Naive thymus-derived CD4-positive, alpha-beta T cell (primary cell): ENCODE measurements at regions of chr17 and their contacts with region 1.

Region 1: DNA sequence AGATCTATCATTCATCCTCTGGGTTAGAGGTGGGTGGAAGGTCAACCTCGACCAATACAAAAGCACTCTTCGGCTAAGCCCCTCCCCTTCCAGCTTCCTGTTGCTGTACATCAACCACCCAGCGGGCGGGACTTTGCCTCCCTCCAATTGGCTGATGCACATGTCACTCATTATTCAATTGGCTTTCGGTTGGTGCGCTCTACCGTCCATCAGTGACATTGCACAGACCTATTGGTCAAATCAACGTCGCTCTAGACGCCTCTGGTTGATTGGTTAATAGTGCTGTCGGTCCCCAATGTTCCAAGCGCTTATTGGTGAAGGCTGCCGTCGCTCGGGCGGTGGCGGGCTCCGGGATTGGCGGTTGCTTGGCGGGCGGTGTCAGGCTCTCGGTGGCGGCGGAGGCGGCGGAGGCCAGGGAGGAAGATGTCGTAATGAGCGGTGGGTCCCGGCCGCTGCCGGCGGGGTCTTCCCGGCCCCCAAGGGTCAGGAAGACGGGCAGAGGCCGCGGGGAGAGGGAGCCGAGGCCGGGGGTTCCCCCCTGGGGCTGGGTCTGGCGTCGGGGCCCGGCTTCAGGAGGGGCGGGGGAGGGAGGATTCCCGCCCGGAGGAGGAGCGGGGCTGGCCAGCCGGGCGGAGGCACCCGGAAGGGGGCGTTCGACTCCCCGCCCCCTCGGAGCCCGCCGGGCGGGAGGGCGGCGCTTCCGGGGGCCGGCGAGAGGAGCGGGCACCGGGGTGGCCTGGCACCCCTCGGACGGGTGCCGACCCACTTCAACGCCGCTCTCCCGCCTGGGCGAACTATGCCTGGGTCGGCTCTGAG is at the start of gene SP2:
- DNase-seq: peak; percentile 96 to 100 (median 100)
- ATAC-seq: peak; percentile 92
- H3K4me3 ChIP-seq: peak within 1 kb of the TSS; percentile 80
- H3K4me3 Mint-ChIP-seq: peak within 1 kb of the TSS; percentile 88 to 100 (median 97)
- H3K27ac ChIP-seq: peak within 1 kb of the TSS; percentile 98
- H3K27ac Mint-ChIP-seq: peak within 1 kb of the TSS; percentile 98 to 100 (median 99)
- H3K4me1 ChIP-seq: peaks cover 20 to 23% of the 10 kb centered on the region in 2 donors
- H3K4me1 Mint-ChIP-seq: peaks cover 31 to 66% (median 57%) of the 10 kb centered on the region in 7 donors
- H3K27me3 ChIP-seq: no peaks in the 10 kb centered on the region
- H3K27me3 Mint-ChIP-seq: peaks cover 0 to 4% (median 0%) of the 10 kb centered on the region in 5 donors
- total RNA-seq, gene SP2: 25.2 to 36.5 (median 30.8) TPM

Region 2: GRCh38 chr17:47323382-47324222 is 572.5 kb before region 1 on chr17 and contains the start of gene EFCAB13:
- CTCF ChIA-PET with region 1: no interaction called
- POLR2A ChIA-PET with region 1: no interaction called
- intact Hi-C with region 1: loop called in 1 of 2 experiments (anchors 5 kb)
- DNase-seq: peak; percentile 55 to 84 (median 73)
- ATAC-seq: peak; percentile 91
- H3K4me3 ChIP-seq: peak within 1 kb of the TSS; percentile 93
- H3K4me3 Mint-ChIP-seq: peak within 1 kb of the TSS; percentile 92 to 100 (median 98)
- H3K27ac ChIP-seq: peak within 1 kb of the TSS; percentile 76
- H3K27ac Mint-ChIP-seq: peak within 1 kb of the TSS; percentile 91 to 99 (median 98)
- H3K4me1 ChIP-seq: peaks cover 0 to 3% of the 10 kb centered on the region in 2 donors
- H3K4me1 Mint-ChIP-seq: peaks cover 13 to 26% (median 22%) of the 10 kb centered on the region in 7 donors
- H3K27me3 ChIP-seq: no peaks in the 10 kb centered on the region
- H3K27me3 Mint-ChIP-seq: peaks cover 0 to 28% (median 0%) of the 10 kb centered on the region in 5 donors
- total RNA-seq, gene EFCAB13: 3.7 to 37.4 (median 19.9) TPM

Region 3: GRCh38 chr17:47698749-47699535 is 197.1 kb before region 1 on chr17:
- CTCF ChIA-PET with region 1: no interaction called
- POLR2A ChIA-PET with region 1: no interaction called
- intact Hi-C with region 1: loop called in 1 of 2 experiments (anchors 10 kb)
- DNase-seq: peak; percentile 34 to 82 (median 63)
- ATAC-seq: peak; percentile 70
- H3K4me3 ChIP-seq: no peak overlapping the region
- H3K4me3 Mint-ChIP-seq: peak overlapping the region in 1 of 10 donors; percentile 29
- H3K27ac ChIP-seq: no peak overlapping the region
- H3K27ac Mint-ChIP-seq: peak overlapping the region in 2 of 9 donors; percentile 38 to 78
- H3K4me1 ChIP-seq: peaks cover 17 to 43% of the 10 kb centered on the region in 2 donors
- H3K4me1 Mint-ChIP-seq: peaks cover 19 to 54% (median 27%) of the 10 kb centered on the region in 7 donors
- H3K27me3 ChIP-seq: no peaks in the 10 kb centered on the region
- H3K27me3 Mint-ChIP-seq: peaks cover 0 to 3% (median 0%) of the 10 kb centered on the region in 5 donors

Region 4: DNA sequence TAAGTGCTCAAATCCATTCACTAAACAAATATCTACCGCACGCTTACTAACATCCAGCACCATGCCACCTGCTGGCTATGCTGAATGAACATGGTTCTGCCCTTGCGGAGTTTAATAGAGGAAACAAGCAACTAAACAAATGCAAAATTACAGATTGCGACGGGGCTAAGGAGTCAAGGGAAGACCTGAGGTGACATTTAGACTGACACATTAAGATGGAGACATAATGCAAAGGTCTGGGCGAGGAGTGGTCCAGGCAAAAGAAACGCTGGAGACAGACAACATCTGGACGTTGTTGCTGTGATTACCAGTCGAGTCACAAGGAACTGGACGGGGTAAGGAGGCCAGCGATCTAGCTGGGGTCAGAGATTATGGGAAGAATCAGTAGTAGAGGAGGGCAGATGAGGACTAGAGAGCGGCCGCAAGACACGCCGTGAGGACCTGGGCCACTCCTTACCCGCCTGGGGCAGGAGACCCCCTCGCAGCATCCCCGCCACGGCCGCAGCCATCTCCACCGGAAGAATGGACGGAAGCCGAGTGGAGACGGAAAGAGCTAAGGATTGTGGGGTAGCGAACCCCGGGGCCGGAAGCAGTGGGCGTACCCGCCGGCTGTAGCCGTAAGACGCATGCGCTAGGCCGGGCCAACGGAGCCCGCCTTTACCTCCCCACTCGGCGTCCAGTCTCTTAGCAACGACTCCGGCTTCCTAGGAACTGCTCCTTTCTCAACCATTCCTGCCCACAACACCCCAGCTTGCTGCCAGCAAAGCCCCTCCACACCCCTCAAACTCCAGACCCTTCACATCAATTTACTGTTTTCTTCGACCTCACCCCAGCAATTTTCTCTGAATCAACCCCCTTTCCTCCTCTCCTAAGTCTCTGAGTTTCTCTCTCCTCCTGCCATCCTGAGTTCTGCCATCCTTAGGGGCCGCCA is 64.8 kb before region 1 on chr17 and contains the starts of genes LRRC46 and MRPL10:
- CTCF ChIA-PET with region 1: interaction called, 4 read pairs
- POLR2A ChIA-PET with region 1: interaction called, 27 read pairs
- intact Hi-C with region 1: loop called (anchors 1 kb)
- DNase-seq: peak; percentile 79 to 96 (median 91)
- ATAC-seq: peak; percentile 88
- H3K4me3 ChIP-seq: peak within 1 kb of the TSS; percentile 99
- H3K4me3 Mint-ChIP-seq: peak within 1 kb of the TSS; percentile 89 to 98 (median 92)
- H3K27ac ChIP-seq: peak within 1 kb of the TSS; percentile 77
- H3K27ac Mint-ChIP-seq: peak within 1 kb of the TSS; percentile 76 to 96 (median 92)
- H3K4me1 ChIP-seq: peaks cover 31 to 38% of the 10 kb centered on the region in 2 donors
- H3K4me1 Mint-ChIP-seq: peaks cover 34 to 79% (median 70%) of the 10 kb centered on the region in 7 donors
- H3K27me3 ChIP-seq: no peaks in the 10 kb centered on the region
- H3K27me3 Mint-ChIP-seq: no peaks in the 10 kb centered on the region
- total RNA-seq, gene LRRC46: 0.20 to 1.7 (median 0.66) TPM
- total RNA-seq, gene MRPL10: 33.6 to 51.2 (median 35.7) TPM

Region 5: DNA sequence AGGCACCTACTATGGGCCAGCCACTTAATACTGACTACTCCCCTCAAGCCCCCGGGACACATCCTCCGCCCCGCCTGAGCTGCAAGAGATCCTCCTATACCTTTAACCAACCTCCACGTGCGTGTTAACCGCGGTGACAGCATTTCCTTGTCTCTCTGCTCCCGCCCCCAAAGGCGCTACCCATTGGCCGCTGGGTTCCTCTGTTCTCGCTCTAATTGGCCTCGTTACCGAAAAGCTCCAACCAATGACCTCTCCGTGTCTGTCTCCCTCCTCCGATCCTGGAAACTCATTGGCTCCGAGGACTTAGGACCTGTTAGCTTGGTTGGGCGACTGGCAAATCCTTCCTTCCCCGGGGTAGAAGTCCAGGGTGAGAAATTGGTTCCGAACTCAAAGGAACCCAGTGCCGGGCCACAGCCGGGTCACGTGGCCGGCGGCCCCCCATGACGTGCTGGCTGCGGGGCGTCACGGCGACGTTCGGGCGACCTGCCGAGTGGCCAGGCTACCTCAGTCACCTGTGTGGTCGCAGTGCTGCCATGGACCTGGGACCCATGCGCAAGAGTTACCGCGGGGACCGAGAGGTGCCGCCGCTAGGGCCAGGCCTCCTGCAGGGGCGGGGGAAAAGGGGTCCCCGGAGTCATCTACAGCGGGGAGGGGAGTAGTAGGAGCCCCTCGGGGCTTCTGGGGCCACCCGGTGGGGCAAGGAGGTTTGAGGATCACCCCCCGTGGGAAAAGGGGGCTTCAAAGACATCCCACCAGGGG is 45.4 kb after region 1 on chr17 and contains the start of gene PNPO:
- CTCF ChIA-PET with region 1: interaction called, 3 read pairs
- POLR2A ChIA-PET with region 1: interaction called, 24 read pairs
- intact Hi-C with region 1: loop called (anchors 1 kb)
- DNase-seq: peak; percentile 66 to 96 (median 94)
- ATAC-seq: peak; percentile 99
- H3K4me3 ChIP-seq: peak within 1 kb of the TSS; percentile 75
- H3K4me3 Mint-ChIP-seq: peak within 1 kb of the TSS; percentile 75 to 96 (median 88)
- H3K27ac ChIP-seq: peak within 1 kb of the TSS; percentile 90
- H3K27ac Mint-ChIP-seq: peak within 1 kb of the TSS; percentile 34 to 95 (median 86)
- H3K4me1 ChIP-seq: peaks cover 21 to 33% of the 10 kb centered on the region in 2 donors
- H3K4me1 Mint-ChIP-seq: peaks cover 35 to 63% (median 47%) of the 10 kb centered on the region in 7 donors
- H3K27me3 ChIP-seq: no peaks in the 10 kb centered on the region
- H3K27me3 Mint-ChIP-seq: no peaks in the 10 kb centered on the region
- total RNA-seq, gene PNPO: 12.0 to 35.7 (median 14.1) TPM

Region 6: GRCh38 chr17:48011405-48012150 is 115.5 kb after region 1 on chr17:
- CTCF ChIA-PET with region 1: no interaction called
- POLR2A ChIA-PET with region 1: no interaction called
- intact Hi-C with region 1: loop called in 1 of 2 experiments (anchors 1 kb)
- DNase-seq: peak in 7 of 9 donors; percentile 20 to 34 (median 32)
- ATAC-seq: peak; percentile 74
- H3K4me3 ChIP-seq: peak overlapping the region; percentile 47
- H3K4me3 Mint-ChIP-seq: peak overlapping the region; percentile 70 to 90 (median 78)
- H3K27ac ChIP-seq: no peak overlapping the region
- H3K27ac Mint-ChIP-seq: peak overlapping the region in 1 of 9 donors; percentile 48
- H3K4me1 ChIP-seq: peaks cover 9% of the 10 kb centered on the region in 2 donors
- H3K4me1 Mint-ChIP-seq: peaks cover 9 to 25% (median 13%) of the 10 kb centered on the region in 7 donors
- H3K27me3 ChIP-seq: peaks cover 7 to 10% of the 10 kb centered on the region in 2 donors
- H3K27me3 Mint-ChIP-seq: peaks cover 44 to 66% (median 55%) of the 10 kb centered on the region in 5 donors

Region 7: DNA sequence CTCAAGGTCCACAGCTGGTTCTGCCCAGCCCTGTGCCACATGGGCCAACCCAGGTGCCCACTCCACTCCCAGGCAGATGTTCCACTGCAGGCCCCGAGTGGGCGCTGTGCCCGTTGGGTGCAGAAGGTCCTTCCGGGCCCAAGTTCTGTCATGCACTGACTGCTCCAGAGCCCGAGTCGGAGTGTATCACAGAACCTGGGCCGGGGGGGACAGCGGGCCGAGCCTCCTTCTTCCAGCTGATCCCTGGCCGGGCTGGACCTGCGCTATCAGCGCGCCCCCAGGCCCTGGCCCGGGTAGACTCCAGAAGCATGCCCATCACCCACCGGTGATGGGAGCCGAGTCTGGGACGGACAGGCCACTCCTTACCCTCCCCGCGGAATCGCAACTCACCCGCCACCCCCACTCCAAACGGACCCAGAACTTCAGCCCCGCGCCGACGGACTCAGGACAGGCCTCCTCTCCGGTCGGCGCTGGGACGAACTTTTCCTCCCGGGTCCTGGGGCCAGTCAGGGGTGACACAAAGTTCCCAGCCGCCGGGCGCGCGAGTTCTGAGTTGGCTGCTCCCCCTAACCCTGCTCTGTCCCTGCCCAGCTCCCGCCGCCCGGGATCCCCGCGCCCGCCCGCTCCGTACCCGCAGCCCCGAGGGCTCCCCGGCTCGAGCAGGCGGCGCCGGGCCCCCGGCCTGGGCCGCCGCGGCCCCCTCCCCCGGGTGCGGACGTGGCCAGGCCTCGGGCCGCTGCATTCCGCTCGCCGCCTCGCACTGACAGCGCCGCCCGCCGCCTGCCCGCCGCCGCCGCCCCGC is 141.2 kb after region 1 on chr17 and contains the start of gene COPZ2:
- CTCF ChIA-PET with region 1: no interaction called
- POLR2A ChIA-PET with region 1: no interaction called
- intact Hi-C with region 1: no loop called
- DNase-seq: peak; percentile 49 to 68 (median 64)
- ATAC-seq: peak; percentile 97
- H3K4me3 ChIP-seq: peak within 1 kb of the TSS; percentile 67
- H3K4me3 Mint-ChIP-seq: peak within 1 kb of the TSS; percentile 76 to 95 (median 88)
- H3K27ac ChIP-seq: peak within 1 kb of the TSS; percentile 45
- H3K27ac Mint-ChIP-seq: peak within 1 kb of the TSS in 4 of 9 donors; percentile 26 to 61 (median 45)
- H3K4me1 ChIP-seq: peaks cover 0 to 3% of the 10 kb centered on the region in 2 donors
- H3K4me1 Mint-ChIP-seq: peaks cover 0 to 17% (median 12%) of the 10 kb centered on the region in 7 donors
- H3K27me3 ChIP-seq: peaks cover 5 to 6% of the 10 kb centered on the region in 2 donors
- H3K27me3 Mint-ChIP-seq: peaks cover 6 to 55% (median 27%) of the 10 kb centered on the region in 5 donors
- total RNA-seq, gene COPZ2: 0.81 to 5.5 (median 1.9) TPM

Region 8: DNA sequence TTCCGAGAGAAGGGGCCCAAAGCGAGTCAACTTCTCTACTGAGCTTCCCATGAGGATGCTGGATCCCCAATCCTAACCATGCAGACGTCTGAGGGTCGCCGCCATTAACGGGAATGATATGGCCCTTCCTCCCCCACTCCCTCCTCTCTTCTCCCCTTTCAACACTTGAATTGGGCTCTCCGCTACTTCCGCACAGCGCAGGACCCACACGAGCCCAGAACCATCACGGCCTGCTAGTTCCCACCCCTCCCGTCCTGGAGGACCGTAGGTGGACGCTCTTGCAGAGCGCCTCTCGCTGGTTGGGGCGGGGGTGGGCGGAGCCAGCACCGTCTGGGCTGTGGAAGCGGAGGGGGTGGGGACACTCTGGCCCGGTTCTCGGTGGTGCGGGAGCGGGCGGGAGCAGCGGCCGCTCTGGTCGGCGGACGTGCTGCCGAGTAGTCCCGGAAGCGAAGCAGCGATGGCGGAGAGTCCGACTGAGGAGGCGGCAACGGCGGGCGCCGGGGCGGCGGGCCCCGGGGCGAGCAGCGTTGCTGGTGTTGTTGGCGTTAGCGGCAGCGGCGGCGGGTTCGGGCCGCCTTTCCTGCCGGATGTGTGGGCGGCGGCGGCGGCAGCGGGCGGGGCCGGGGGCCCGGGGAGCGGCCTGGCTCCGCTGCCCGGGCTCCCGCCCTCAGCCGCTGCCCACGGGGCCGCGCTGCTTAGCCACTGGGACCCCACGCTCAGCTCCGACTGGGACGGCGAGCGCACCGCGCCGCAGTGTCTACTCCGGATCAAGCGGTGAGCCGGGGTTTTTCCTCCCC is 1012.2 kb after region 1 on chr17 and contains the start of gene UBE2Z:
- CTCF ChIA-PET with region 1: no interaction called
- POLR2A ChIA-PET with region 1: no interaction called
- intact Hi-C with region 1: loop called in 1 of 2 experiments (anchors 1 kb)
- DNase-seq: peak; percentile 71 to 86 (median 84)
- ATAC-seq: peak; percentile 96
- H3K4me3 ChIP-seq: peak within 1 kb of the TSS; percentile 62
- H3K4me3 Mint-ChIP-seq: peak within 1 kb of the TSS; percentile 90 to 100 (median 96)
- H3K27ac ChIP-seq: peak within 1 kb of the TSS; percentile 93
- H3K27ac Mint-ChIP-seq: peak within 1 kb of the TSS; percentile 95 to 99 (median 98)
- H3K4me1 ChIP-seq: peaks cover 22 to 33% of the 10 kb centered on the region in 2 donors
- H3K4me1 Mint-ChIP-seq: peaks cover 32 to 52% (median 50%) of the 10 kb centered on the region in 7 donors
- H3K27me3 ChIP-seq: no peaks in the 10 kb centered on the region
- H3K27me3 Mint-ChIP-seq: no peaks in the 10 kb centered on the region
- total RNA-seq, gene UBE2Z: 71.6 to 96.6 (median 91.8) TPM